Heart right ventricle (tissue), 16 donors: ENCODE measurements at regions of chr4 and their contacts with region 1.

Region 1: GRCh38 chr4:143335979-143336780 is 496 bp upstream of the GAB1 start:
- DNase-seq: peak; percentile 91 to 93
- ATAC-seq: peak; percentile 90 to 95 (median 92)
- H3K4me3 ChIP-seq: peak overlapping the region; percentile 65 to 97 (median 90)
- H3K27ac ChIP-seq: peak overlapping the region; percentile 93 to 98 (median 96)
- H3K4me1 ChIP-seq: peaks cover 3 to 44% (median 33%) of the 10 kb centered on the region in 9 donors
- H3K27me3 ChIP-seq: no peaks in the 10 kb centered on the region
- CTCF ChIP-seq: no peak

Region 2: DNA sequence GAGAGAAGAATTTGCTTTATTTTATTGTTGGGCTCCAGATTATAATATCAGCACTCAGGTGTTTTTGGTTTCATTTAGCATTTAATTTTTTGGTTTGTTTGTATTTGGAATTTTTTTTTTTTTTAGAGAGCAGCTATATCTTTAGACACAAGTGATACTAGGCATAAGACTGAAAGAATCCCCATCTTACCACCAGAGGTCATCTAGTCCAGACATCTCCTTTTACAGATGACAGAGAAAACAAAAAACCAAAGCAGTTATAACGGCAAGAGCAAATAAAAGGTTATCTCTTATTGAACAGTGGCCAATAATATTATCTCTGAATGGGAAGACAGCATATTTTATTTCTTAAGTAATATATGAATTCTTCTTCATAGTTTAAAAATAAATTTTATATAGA is 128.6 kb before region 1 on chr4:
- intact Hi-C with region 1: loop called in 8 of 10 experiments (anchors 5 to 10 kb)
- DNase-seq: no peak
- ATAC-seq: peak in 5 of 8 donors; percentile 38 to 63 (median 58)
- H3K4me3 ChIP-seq: no peak overlapping the region
- H3K27ac ChIP-seq: no peak overlapping the region
- H3K4me1 ChIP-seq: peaks cover 0 to 13% (median 7%) of the 10 kb centered on the region in 9 donors
- H3K27me3 ChIP-seq: no peaks in the 10 kb centered on the region
- CTCF ChIP-seq: peak; percentile 9 to 68 (median 53)

Region 3: DNA sequence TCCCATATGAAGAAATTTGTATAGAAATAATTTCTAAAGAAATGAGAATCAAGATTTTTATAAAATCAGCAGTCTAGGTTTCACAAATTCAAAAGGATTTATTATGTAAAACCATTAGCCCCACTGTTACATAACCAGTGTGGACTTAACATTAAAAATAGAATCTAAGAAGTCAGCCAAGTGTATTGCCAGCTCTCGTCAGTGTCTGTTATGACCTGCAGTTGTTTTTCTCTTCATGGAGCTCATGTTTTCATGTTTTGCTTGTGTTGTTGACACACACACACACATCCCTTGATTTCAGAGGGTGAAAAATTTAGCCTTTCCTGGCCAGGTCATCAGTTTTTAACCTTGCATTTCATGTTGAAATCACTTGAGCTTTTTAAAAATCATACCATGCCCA is 111.9 kb before region 1 on chr4:
- intact Hi-C with region 1: loop called in 3 of 10 experiments (anchors 5 to 10 kb)
- DNase-seq: peak in 1 of 2 donors; percentile 9
- ATAC-seq: peak in 7 of 8 donors; percentile 48 to 90 (median 82)
- H3K4me3 ChIP-seq: no peak overlapping the region
- H3K27ac ChIP-seq: peak overlapping the region in 5 of 10 donors; percentile 9 to 49 (median 29)
- H3K4me1 ChIP-seq: peaks cover 0 to 41% (median 9%) of the 10 kb centered on the region in 9 donors
- H3K27me3 ChIP-seq: no peaks in the 10 kb centered on the region
- CTCF ChIP-seq: no peak

Region 4: GRCh38 chr4:143294310-143294709 is 41.9 kb before region 1 on chr4:
- intact Hi-C with region 1: loop called in 4 of 10 experiments (anchors 2 to 10 kb)
- DNase-seq: peak; percentile 83 to 86
- ATAC-seq: peak; percentile 89 to 94 (median 92)
- H3K4me3 ChIP-seq: no peak overlapping the region
- H3K27ac ChIP-seq: peak overlapping the region in 5 of 10 donors; percentile 6 to 48 (median 25)
- H3K4me1 ChIP-seq: peaks cover 0 to 36% (median 21%) of the 10 kb centered on the region in 9 donors
- H3K27me3 ChIP-seq: no peaks in the 10 kb centered on the region
- CTCF ChIP-seq: no peak

Region 5: GRCh38 chr4:143381171-143382118 is 45.3 kb after region 1 on chr4:
- intact Hi-C with region 1: loop called in 2 of 10 experiments (anchors 5 kb)
- DNase-seq: peak; percentile 75 to 91
- ATAC-seq: peak; percentile 81 to 95 (median 92)
- H3K4me3 ChIP-seq: peak overlapping the region in 5 of 10 donors; percentile 1 to 29 (median 22)
- H3K27ac ChIP-seq: peak overlapping the region; percentile 11 to 88 (median 84)
- H3K4me1 ChIP-seq: peaks cover 17 to 99% (median 88%) of the 10 kb centered on the region in 9 donors
- H3K27me3 ChIP-seq: no peaks in the 10 kb centered on the region
- CTCF ChIP-seq: no peak

Region 6: DNA sequence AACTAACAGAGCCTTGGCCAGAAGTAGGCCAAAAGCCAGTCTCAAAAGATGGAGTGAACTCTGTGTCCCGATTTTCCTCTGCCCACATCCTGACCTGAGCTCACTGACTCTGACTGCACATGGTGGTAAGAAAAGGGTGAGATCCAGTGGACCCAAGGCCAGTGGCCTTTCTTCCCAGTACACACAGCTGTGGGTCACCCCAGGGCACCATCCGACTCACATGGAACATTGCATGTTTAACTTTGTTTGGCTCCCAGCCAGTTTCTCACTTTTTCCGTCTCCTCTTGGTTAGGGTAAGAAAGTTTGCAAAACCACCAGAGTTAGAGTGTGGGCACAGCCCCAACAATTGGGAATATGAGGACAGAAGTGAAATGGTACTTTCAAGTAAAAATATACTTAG is 70.3 kb after region 1 on chr4:
- intact Hi-C with region 1: loop called in 1 of 10 experiments (anchors 5 kb)
- DNase-seq: peak; percentile 42 to 77
- ATAC-seq: peak; percentile 41 to 86 (median 54)
- H3K4me3 ChIP-seq: no peak overlapping the region
- H3K27ac ChIP-seq: peak overlapping the region in 9 of 10 donors; percentile 24 to 78 (median 53)
- H3K4me1 ChIP-seq: peaks cover 33 to 100% (median 94%) of the 10 kb centered on the region in 9 donors
- H3K27me3 ChIP-seq: no peaks in the 10 kb centered on the region
- CTCF ChIP-seq: no peak

Region 7: DNA sequence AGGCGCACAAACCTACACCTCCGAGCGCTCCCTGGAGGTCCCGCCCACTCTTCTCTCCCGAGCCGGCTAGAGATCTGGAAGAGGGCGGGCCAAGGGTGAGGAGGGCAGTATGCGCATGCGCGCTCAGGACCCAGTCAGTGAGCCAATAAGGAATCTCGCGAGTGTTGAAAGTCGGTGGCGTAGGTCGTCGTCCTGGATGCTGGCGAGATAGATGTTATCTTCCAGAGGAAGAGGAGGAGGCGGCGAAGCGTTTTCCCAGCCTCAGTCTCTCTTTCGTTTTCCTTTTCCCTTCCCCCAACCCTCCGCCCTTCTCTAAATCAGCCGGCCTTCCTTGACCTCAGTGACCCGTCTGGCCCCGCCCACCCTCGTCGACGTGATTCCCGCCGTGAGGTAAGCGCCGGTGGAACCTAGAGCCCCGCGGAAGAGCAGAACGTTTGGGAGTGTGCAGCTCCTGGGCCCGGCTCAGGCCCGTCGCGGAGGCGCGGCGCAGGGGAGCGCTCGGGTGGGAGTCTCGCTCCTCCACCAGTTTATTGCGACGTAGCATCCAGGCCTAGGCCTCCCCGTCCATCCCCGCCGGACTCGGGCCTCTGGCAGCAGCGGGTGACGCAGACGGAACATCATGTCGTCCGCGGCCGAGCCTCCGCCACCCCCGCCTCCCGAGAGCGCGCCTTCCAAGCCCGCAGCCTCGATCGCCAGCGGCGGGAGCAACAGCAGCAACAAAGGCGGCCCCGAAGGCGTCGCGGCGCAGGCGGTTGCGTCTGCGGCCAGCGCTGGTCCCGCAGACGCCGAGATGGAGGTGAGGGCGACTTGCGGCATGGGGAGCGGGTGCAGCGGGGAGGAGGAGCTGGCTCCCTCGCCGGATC is 177.4 kb after region 1 on chr4 and contains the start of gene SMARCA5:
- intact Hi-C with region 1: loop called in 1 of 10 experiments (anchors 5 kb)
- DNase-seq: peak; percentile 96
- ATAC-seq: peak; percentile 93 to 97 (median 96)
- H3K4me3 ChIP-seq: peak within 1 kb of the TSS; percentile 64 to 94 (median 84)
- H3K27ac ChIP-seq: peak within 1 kb of the TSS; percentile 90 to 98 (median 97)
- H3K4me1 ChIP-seq: peaks cover 0 to 46% (median 35%) of the 10 kb centered on the region in 9 donors
- H3K27me3 ChIP-seq: no peaks in the 10 kb centered on the region
- CTCF ChIP-seq: no peak
- total RNA-seq, gene SMARCA5: 25.4 to 39.7 (median 34.6) TPM